ENCODE measurements at regions of chr17 and their contacts with region 1.

Region 1: GRCh38 chr17:42744806-42745617 is at the start of gene EZH1:
- DNase-seq: peak; percentile 93
- H3K4me3 Mint-ChIP-seq: peak within 1 kb of the TSS; percentile 90
- H3K27ac Mint-ChIP-seq: peak within 1 kb of the TSS; percentile 93
- H3K4me1 Mint-ChIP-seq: peaks cover 21% of the 10 kb centered on the region
- H3K27me3 Mint-ChIP-seq: peaks cover 6% of the 10 kb centered on the region
- total RNA-seq, gene EZH1: 31.9 to 34.0 TPM

Region 2: GRCh38 chr17:42153919-42154742 is 590.9 kb before region 1 on chr17:
- CTCF ChIA-PET with region 1: no interaction called
- intact Hi-C with region 1: no loop called
- DNase-seq: no peak
- H3K4me3 Mint-ChIP-seq: peak overlapping the region; percentile 83
- H3K27ac Mint-ChIP-seq: peak overlapping the region; percentile 87
- H3K4me1 Mint-ChIP-seq: peaks cover 39% of the 10 kb centered on the region
- H3K27me3 Mint-ChIP-seq: no peaks in the 10 kb centered on the region

Region 3: GRCh38 chr17:42783062-42783777 is 38.2 kb after region 1 on chr17:
- CTCF ChIA-PET with region 1: no interaction called
- intact Hi-C with region 1: no loop called
- DNase-seq: no peak
- H3K4me3 Mint-ChIP-seq: no peak overlapping the region
- H3K27ac Mint-ChIP-seq: no peak overlapping the region
- H3K4me1 Mint-ChIP-seq: peaks cover 29% of the 10 kb centered on the region
- H3K27me3 Mint-ChIP-seq: peaks cover 60% of the 10 kb centered on the region

Region 4: GRCh38 chr17:42798383-42799380 is 53.7 kb after region 1 on chr17 and contains the starts of genes CNTD1 and COA3:
- CTCF ChIA-PET with region 1: no interaction called
- intact Hi-C with region 1: loop called (anchors 2 kb)
- DNase-seq: peak; percentile 90
- H3K4me3 Mint-ChIP-seq: peak within 1 kb of the TSS; percentile 91
- H3K27ac Mint-ChIP-seq: peak within 1 kb of the TSS; percentile 62
- H3K4me1 Mint-ChIP-seq: peaks cover 21% of the 10 kb centered on the region
- H3K27me3 Mint-ChIP-seq: no peaks in the 10 kb centered on the region
- total RNA-seq, gene CNTD1: not detected
- total RNA-seq, gene COA3: 23.7 to 24.4 TPM